ENCODE measurements at regions of chr11 and their contacts with region 1.

Region 1: DNA sequence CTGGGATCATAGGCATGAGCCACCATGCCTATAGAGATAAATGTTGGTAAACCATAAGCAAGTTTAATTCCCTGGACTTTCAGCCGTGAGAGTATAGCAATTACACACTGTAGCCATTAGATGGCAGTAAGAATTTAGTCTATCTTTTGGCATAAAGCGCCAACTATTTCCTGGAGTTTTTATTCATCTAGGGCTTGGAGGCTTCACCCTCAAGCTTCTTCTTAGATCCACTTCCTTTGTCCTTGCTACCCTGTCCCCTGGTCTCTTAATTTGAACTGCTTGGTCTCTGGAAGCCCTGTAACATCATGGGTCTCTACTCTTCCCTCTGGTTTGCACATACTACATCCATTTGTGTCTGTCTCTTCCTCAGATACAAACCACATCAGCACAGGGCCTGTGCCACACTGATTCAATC is 38.2 kb downstream of the OR10A6 start:
- DNase-seq: no peak
- H3K4me3 ChIP-seq: no peak overlapping the region
- H3K27ac ChIP-seq: no peak overlapping the region
- H3K4me1 ChIP-seq: no peaks in the 10 kb centered on the region
- H3K27me3 ChIP-seq: no peaks in the 10 kb centered on the region
- CTCF ChIP-seq: peak; percentile 23 to 80 (median 56)
- POLR2A ChIP-seq: no peak

Region 2: DNA sequence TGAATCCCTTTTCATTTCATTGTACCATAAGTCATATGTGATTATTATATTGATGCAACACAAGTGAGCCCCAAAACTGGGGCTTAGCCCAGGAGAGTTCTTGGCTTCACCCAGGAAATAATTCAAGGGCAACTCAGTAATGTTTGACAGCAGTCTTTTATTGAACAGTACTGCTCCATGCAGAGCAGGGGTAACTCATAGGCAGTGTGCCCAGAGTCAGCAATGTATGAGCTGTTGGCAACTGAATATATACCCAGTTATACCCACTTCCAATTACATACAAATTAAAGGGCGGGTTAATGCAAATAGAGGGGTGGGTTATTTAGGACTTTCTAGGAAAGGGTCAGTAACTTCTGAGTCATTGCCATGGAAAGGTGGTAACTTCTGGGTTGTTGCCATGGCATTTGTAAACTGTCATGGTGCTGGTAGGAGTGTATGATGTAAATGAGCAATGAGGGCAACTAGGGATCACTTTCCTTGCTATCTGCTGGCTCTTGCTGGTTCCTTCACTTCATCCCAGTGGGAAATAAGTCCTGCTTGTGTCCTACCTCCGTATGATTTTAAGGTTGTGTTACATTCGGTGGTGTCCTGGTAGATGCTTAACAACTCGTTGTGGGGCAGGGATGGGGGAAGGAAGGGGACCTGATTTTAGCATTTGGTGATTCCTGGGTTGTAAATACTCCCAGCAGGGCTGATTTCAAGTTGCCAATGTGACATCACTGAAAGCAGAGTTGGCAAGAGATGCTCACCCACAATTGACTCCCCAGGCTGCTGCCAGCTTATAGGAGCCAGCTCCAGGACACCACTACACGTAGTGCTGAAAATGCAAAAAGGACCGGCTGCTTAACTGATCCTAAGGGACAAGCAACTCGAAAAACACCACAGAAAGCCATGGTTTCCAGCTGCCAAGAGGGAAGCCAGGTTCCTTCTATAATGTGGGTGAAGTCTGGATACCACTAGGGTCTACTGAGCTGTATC is 571.1 kb before region 1 on chr11:
- intact Hi-C with region 1: no loop called
- DNase-seq: no peak
- H3K4me3 ChIP-seq: no peak overlapping the region
- H3K27ac ChIP-seq: no peak overlapping the region
- H3K4me1 ChIP-seq: no peaks in the 10 kb centered on the region
- H3K27me3 ChIP-seq: no peaks in the 10 kb centered on the region
- CTCF ChIP-seq: no peak
- POLR2A ChIP-seq: no peak

Region 3: DNA sequence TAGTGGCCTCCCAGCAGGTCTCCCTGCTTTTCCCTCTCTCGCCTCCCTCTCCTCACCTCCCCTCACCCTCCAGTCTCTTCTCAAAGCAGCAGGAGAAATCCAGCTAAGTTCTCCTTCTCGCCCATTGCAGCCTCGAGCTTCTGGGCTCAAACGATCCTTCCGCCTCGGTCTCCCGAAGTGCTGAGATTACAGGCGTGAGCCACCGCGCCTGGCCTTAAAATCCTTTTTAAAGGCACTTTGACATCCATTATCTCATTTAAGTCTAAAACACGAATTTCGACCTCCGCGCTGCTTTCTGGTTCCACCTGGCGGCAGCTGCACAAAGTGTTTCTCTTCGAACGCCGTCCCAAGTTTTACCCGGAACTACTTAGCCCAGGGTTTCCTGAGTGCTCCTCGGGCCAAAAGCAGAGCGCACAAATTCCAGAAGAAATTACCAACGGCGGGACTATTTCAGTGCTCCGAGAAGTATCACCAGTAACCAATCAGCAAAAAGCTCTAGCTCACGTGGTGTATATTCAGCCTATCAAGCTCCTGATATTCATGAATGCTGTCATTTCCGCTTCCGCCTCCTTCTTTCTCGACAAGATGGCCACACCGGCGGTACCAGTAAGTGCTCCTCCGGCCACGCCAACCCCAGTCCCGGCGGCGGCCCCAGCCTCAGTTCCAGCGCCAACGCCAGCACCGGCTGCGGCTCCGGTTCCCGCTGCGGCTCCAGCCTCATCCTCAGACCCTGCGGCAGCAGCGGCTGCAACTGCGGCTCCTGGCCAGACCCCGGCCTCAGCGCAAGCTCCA is 94.1 kb after region 1 on chr11 and contains the start of gene EIF3F:
- intact Hi-C with region 1: loop called (anchors 2 kb)
- DNase-seq: peak; percentile 97
- H3K4me3 ChIP-seq: peak within 1 kb of the TSS; percentile 72 to 78
- H3K27ac ChIP-seq: peak within 1 kb of the TSS; percentile 50 to 62
- H3K4me1 ChIP-seq: peaks cover 13% of the 10 kb centered on the region
- H3K27me3 ChIP-seq: no peaks in the 10 kb centered on the region
- CTCF ChIP-seq: peak; percentile 72 to 97 (median 88)
- POLR2A ChIP-seq: peak; percentile 34
- total RNA-seq, gene EIF3F: 321 to 473 TPM